ENCODE measurements at regions of chr3 and their contacts with region 1.

Region 1: GRCh38 chr3:152183473-152183872 is 85.3 kb upstream of the MBNL1 start:
- DNase-seq: peak in 7 of 9 donors; percentile 41 to 64 (median 55)
- ATAC-seq: peak; percentile 83
- H3K4me3 ChIP-seq: no peak overlapping the region
- H3K4me3 Mint-ChIP-seq: peak overlapping the region; percentile 40 to 74 (median 52)
- H3K27ac ChIP-seq: no peak overlapping the region
- H3K27ac Mint-ChIP-seq: peak overlapping the region in 8 of 9 donors; percentile 48 to 89 (median 70)
- H3K4me1 ChIP-seq: peaks cover 13 to 34% of the 10 kb centered on the region in 2 donors
- H3K4me1 Mint-ChIP-seq: peaks cover 39 to 82% (median 76%) of the 10 kb centered on the region in 7 donors
- H3K27me3 ChIP-seq: no peaks in the 10 kb centered on the region
- H3K27me3 Mint-ChIP-seq: no peaks in the 10 kb centered on the region

Region 2: DNA sequence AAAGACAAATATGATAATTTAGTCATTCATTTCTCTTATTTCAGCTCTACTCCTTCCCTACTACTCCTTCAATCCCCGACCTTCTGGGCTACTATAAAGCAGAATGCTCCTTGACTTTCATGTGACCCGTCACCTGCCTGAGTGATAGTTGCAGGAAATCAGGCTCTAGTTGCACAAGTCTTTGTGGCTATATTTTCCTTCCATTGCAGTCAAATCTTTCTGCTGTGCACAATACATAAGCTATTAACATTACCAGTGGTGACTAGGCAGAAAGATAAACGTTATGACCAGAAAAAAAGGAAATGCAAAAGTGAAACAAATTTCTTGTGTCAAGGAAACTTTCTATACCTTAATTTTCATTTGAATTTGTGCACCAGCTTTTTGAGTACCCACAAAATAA is 307.7 kb before region 1 on chr3:
- CTCF ChIA-PET with region 1: no interaction called
- POLR2A ChIA-PET with region 1: no interaction called
- intact Hi-C with region 1: no loop called
- DNase-seq: no peak
- ATAC-seq: peak; percentile 39
- H3K4me3 ChIP-seq: no peak overlapping the region
- H3K4me3 Mint-ChIP-seq: peak overlapping the region in 1 of 10 donors; percentile 22
- H3K27ac ChIP-seq: no peak overlapping the region
- H3K27ac Mint-ChIP-seq: no peak overlapping the region
- H3K4me1 ChIP-seq: no peaks in the 10 kb centered on the region
- H3K4me1 Mint-ChIP-seq: peaks cover 8 to 21% (median 16%) of the 10 kb centered on the region in 7 donors
- H3K27me3 ChIP-seq: no peaks in the 10 kb centered on the region
- H3K27me3 Mint-ChIP-seq: peaks cover 0 to 9% (median 5%) of the 10 kb centered on the region in 5 donors

Region 3: DNA sequence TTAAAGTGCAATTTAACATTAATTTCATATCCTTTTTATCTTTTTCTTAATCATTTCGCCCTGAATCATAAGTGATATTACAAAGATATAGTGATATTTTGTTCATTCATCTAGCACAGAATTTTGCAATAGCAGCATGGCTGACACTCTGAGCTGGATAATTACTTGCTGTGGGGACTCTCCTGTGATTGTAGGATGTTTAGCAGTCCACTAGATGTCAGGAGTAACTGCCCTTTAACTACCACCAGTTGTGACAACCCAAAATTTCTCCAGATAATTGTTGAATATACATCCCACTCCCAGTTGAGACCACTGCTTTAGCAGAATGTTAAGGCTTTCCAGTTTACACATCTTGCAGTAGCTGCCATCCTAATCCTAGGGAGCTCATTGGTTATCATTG is 111.5 kb before region 1 on chr3:
- CTCF ChIA-PET with region 1: no interaction called
- POLR2A ChIA-PET with region 1: no interaction called
- intact Hi-C with region 1: loop called (anchors 5 kb)
- DNase-seq: peak in 6 of 9 donors; percentile 10 to 43 (median 32)
- ATAC-seq: peak; percentile 75
- H3K4me3 ChIP-seq: no peak overlapping the region
- H3K4me3 Mint-ChIP-seq: no peak overlapping the region
- H3K27ac ChIP-seq: no peak overlapping the region
- H3K27ac Mint-ChIP-seq: no peak overlapping the region
- H3K4me1 ChIP-seq: peaks cover 0 to 5% of the 10 kb centered on the region in 2 donors
- H3K4me1 Mint-ChIP-seq: peaks cover 0 to 6% (median 3%) of the 10 kb centered on the region in 7 donors
- H3K27me3 ChIP-seq: no peaks in the 10 kb centered on the region
- H3K27me3 Mint-ChIP-seq: peaks cover 0 to 6% (median 0%) of the 10 kb centered on the region in 5 donors

Region 4: DNA sequence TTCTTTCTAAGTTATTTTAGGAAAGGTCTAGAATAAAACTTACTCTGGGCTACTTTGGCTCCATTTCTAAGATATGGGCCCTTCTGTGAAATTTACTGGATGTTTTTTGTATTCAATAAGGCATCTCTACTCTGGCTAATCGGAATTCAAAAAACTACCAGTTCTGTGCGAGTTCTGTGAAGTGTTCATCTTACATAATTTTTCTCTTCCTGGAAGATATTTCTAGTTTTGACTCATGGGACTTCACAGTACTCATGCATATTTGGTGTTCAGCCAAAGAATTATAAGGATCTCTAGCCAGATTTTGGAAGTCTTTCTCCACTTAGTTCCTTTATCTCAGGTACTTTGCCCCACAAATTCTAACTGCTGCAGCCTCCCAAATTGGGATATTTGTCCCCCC is 38.9 kb after region 1 on chr3:
- CTCF ChIA-PET with region 1: interaction called, 6 read pairs
- POLR2A ChIA-PET with region 1: interaction called, 19 read pairs
- intact Hi-C with region 1: no loop called
- DNase-seq: peak in 1 of 9 donors; percentile 14
- ATAC-seq: peak; percentile 57
- H3K4me3 ChIP-seq: peak overlapping the region; percentile 3
- H3K4me3 Mint-ChIP-seq: peak overlapping the region; percentile 48 to 86 (median 74)
- H3K27ac ChIP-seq: peak overlapping the region; percentile 67
- H3K27ac Mint-ChIP-seq: peak overlapping the region; percentile 65 to 99 (median 92)
- H3K4me1 ChIP-seq: peaks cover 4 to 46% of the 10 kb centered on the region in 2 donors
- H3K4me1 Mint-ChIP-seq: peaks cover 49 to 80% (median 71%) of the 10 kb centered on the region in 7 donors
- H3K27me3 ChIP-seq: no peaks in the 10 kb centered on the region
- H3K27me3 Mint-ChIP-seq: no peaks in the 10 kb centered on the region

Region 5: GRCh38 chr3:152281133-152281713 is 97.8 kb after region 1 on chr3:
- CTCF ChIA-PET with region 1: interaction called, 10 read pairs
- POLR2A ChIA-PET with region 1: interaction called, 135 read pairs
- intact Hi-C with region 1: no loop called
- DNase-seq: no peak
- ATAC-seq: peak; percentile 12
- H3K4me3 ChIP-seq: peak overlapping the region; percentile 18
- H3K4me3 Mint-ChIP-seq: peak overlapping the region; percentile 64 to 79 (median 72)
- H3K27ac ChIP-seq: peak overlapping the region; percentile 49
- H3K27ac Mint-ChIP-seq: peak overlapping the region; percentile 6 to 94 (median 73)
- H3K4me1 ChIP-seq: peaks cover 47 to 86% of the 10 kb centered on the region in 2 donors
- H3K4me1 Mint-ChIP-seq: peaks cover 55 to 95% (median 85%) of the 10 kb centered on the region in 7 donors
- H3K27me3 ChIP-seq: no peaks in the 10 kb centered on the region
- H3K27me3 Mint-ChIP-seq: no peaks in the 10 kb centered on the region

Region 6: GRCh38 chr3:152444029-152444641 is 260.7 kb after region 1 on chr3:
- CTCF ChIA-PET with region 1: interaction called, 61 read pairs
- POLR2A ChIA-PET with region 1: interaction called, 5 read pairs
- intact Hi-C with region 1: loop called in 1 of 2 experiments (anchors 1 kb)
- DNase-seq: peak in 5 of 9 donors; percentile 31 to 42 (median 36)
- ATAC-seq: peak; percentile 60
- H3K4me3 ChIP-seq: no peak overlapping the region
- H3K4me3 Mint-ChIP-seq: peak overlapping the region in 6 of 10 donors; percentile 0 to 45 (median 26)
- H3K27ac ChIP-seq: peak overlapping the region; percentile 50
- H3K27ac Mint-ChIP-seq: peak overlapping the region; percentile 2 to 68 (median 56)
- H3K4me1 ChIP-seq: peaks cover 24 to 27% of the 10 kb centered on the region in 2 donors
- H3K4me1 Mint-ChIP-seq: peaks cover 49 to 90% (median 78%) of the 10 kb centered on the region in 7 donors
- H3K27me3 ChIP-seq: no peaks in the 10 kb centered on the region
- H3K27me3 Mint-ChIP-seq: no peaks in the 10 kb centered on the region

Measured in naive thymus-derived CD4-positive, alpha-beta T cell (primary cell).